ENCODE measurements at regions of chr11 and their contacts with region 1.

Region 1: GRCh38 chr11:65382033-65382807 is at the start of gene SLC25A45:
- DNase-seq: peak; percentile 78 to 98
- ATAC-seq: peak; percentile 88 to 90
- H3K4me3 ChIP-seq: peak within 1 kb of the TSS; percentile 46
- H3K27ac ChIP-seq: peak within 1 kb of the TSS; percentile 93 to 99
- H3K4me1 ChIP-seq: peaks cover 80% of the 10 kb centered on the region
- CTCF ChIP-seq: peak; percentile 52; the same call in 2 of the 3 replicates
- EP300 ChIP-seq: peak; percentile 19 to 35; a peak in 3 of 5 replicates
- POLR2A ChIP-seq: no peak; the same call in none of the 2 replicates
- RAD21 ChIP-seq: peak; percentile 75 to 81
- polyA plus RNA-seq, gene SLC25A45: 3.1 and 4.9 TPM in 2 replicates

Region 2: GRCh38 chr11:65366340-65366773 is 15.9 kb before region 1 on chr11:
- CTCF ChIA-PET with region 1: interaction called, 16 read pairs
- POLR2A ChIA-PET with region 1: interaction called, 6 read pairs
- DNase-seq: peak; percentile 88 to 90
- ATAC-seq: peak; percentile 84 to 85
- H3K4me3 ChIP-seq: no peak overlapping the region
- H3K27ac ChIP-seq: peak overlapping the region; percentile 45 to 72; a peak in 5 of 6 replicates
- H3K4me1 ChIP-seq: peaks cover 18% of the 10 kb centered on the region
- CTCF ChIP-seq: peak; percentile 85
- EP300 ChIP-seq: no peak
- POLR2A ChIP-seq: no peak
- RAD21 ChIP-seq: peak; percentile 91 to 96

Region 3: GRCh38 chr11:65398362-65398910 is 16.2 kb after region 1 on chr11:
- CTCF ChIA-PET with region 1: interaction called, 12 read pairs
- POLR2A ChIA-PET with region 1: interaction called, 4 read pairs
- DNase-seq: no peak
- ATAC-seq: no peak
- H3K4me3 ChIP-seq: no peak overlapping the region
- H3K27ac ChIP-seq: no peak overlapping the region
- H3K4me1 ChIP-seq: 0 out of 3 replicates have a peak, but pooled peaks cover 4% of the 10 kb centered on the region
- CTCF ChIP-seq: no peak
- EP300 ChIP-seq: no peak
- POLR2A ChIP-seq: no peak
- RAD21 ChIP-seq: no peak